Colonic mucosa (tissue), 4 donors: ENCODE measurements at regions of chr14 and their contacts with region 1.

Region 1: DNA sequence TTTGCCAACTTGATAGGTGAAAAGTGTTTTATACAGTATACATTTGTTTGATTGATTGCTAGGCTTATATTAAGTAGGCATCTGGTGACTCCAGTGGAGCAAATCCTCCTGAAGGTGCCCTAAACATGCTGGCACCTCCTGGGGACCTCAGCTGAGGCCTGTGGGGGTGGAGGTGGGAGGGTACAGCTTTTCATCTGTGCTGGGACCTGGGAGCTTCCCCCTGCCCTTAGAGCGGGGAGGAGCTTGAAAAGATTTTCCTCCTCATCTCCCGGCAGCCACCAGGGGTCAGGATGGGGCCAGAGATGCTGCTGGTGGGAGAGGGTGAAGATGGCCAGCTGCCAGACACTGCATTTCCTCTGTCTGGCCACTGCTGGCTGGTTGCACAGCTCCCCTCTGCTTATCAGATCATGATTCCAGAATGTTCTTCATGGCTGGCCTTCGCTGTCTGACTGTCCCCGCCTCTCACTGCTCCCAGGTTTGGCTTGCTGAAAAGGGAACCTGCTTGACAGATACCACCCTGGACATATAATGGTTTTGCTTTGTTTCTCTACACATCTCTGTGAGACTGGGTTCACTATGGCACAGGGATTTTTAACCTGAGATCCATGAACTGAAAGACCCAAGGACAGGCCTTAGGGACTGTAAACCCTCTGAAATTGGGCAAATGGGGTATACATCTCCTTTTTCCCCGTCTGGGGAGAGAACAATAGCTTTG is 10.5 kb upstream of the JPH4 start:
- DNase-seq: peak; percentile 93
- H3K4me3 ChIP-seq: no peak overlapping the region
- H3K27ac ChIP-seq: no peak overlapping the region
- H3K4me1 ChIP-seq: no peaks in the 10 kb centered on the region
- H3K27me3 ChIP-seq: no peaks in the 10 kb centered on the region
- CTCF ChIP-seq: peak; percentile 77

Region 2: DNA sequence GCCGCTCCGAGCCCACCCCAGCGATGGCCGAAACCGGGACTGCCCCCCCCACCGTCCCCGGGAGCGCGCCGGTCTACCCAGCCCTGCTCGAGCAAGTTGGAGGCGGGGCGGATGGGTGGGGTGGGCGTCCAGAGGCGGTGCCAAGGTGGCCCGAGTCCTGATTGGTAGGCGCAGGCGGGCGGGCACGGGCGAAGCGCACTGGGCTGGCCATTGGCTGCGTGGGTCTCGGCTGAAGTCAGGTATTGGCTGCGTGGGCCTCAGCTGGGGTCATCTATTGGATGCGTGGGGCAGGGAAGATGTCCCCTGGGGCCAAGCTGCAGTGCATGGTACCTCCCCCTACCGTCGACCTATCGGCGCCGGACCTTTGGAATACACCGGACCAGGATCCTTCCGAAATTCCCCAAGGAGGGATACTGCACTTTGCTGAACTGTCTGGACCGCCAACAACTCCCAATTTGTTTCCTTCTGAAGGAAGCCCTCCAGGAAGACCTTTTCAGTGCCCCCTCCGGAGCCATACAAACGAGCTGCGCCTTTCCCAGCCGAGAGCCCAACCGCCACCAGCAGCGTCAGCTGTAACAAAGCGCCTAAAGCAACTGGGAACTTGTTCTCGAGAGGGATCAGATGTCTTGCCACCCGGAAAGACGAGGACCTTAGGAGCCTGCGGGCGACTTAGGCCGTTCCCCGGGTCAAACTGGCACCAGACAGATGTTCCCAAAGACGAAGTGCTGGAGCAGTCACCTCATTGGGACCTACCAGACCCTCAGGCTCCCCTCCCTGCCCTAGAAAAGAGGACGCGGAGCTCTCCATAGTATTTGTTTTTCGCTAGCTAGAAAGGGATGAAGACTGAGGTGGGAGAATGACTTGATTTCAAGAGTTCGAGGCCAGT is 302.8 kb before region 1 on chr14 and contains the start of gene HOMEZ:
- intact Hi-C with region 1: no loop called
- DNase-seq: peak; percentile 99
- H3K4me3 ChIP-seq: peak within 1 kb of the TSS; percentile 70
- H3K27ac ChIP-seq: peak within 1 kb of the TSS; percentile 99
- H3K4me1 ChIP-seq: peaks cover 4% of the 10 kb centered on the region
- H3K27me3 ChIP-seq: no peaks in the 10 kb centered on the region
- CTCF ChIP-seq: no peak
- total RNA-seq, gene HOMEZ: 16.5 to 21.9 TPM

Region 3: DNA sequence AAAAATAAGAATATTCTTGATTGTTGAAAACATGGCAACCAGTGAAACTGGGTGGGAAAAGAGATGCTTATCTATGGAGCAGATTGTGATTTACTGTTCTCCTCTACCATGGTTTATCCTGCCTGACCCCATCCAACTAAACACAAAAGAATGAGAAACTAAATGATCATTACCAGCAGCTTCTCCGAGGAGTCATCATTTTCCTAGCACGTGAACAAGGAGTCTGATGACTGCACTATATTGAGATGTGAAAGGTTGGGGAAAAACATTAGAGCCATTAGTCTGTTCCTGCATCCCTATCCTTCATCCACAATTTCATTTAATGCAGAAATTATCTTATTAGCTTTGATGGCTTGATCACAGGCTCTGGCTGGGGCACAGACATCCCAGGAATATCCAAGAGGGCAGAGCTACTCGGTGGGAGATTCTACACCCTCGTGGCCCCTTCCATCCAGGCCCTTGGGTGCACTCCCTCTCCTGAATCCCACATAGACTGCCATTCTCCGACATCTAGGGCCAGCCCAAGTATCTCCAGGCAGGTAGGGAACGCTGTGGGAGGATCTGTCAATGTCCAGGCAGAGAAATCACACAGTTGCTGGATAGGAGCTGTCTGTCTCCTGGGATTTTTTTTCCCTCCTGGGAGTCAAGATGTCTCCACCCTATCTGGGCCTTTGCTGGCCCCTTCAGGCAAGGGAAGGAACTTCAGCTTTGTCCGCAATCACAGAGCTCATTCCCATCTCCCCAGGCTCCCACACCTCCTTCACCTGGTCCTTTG is 321.2 kb after region 1 on chr14:
- intact Hi-C with region 1: loop called (anchors 5 kb)
- DNase-seq: peak; percentile 64
- H3K4me3 ChIP-seq: no peak overlapping the region
- H3K27ac ChIP-seq: no peak overlapping the region
- H3K4me1 ChIP-seq: no peaks in the 10 kb centered on the region
- H3K27me3 ChIP-seq: no peaks in the 10 kb centered on the region
- CTCF ChIP-seq: peak; percentile 73